Prostate gland (tissue), 2 donors: ENCODE measurements at regions of chr11 and their contacts with region 1.

Region 1: GRCh38 chr11:79437278-79437980 is 3.4 kb downstream of the TENM4 start:
- DNase-seq: peak; percentile 44
- H3K4me3 ChIP-seq: peak overlapping the region; percentile 27
- H3K27ac ChIP-seq: peak overlapping the region in 1 of 2 donors; percentile 7
- H3K4me1 ChIP-seq: peaks cover 6% of the 10 kb centered on the region
- H3K27me3 ChIP-seq: no peaks in the 10 kb centered on the region
- CTCF ChIP-seq: no peak
- POLR2A ChIP-seq: no peak

Region 2: GRCh38 chr11:79236541-79236971 is 200.9 kb before region 1 on chr11:
- intact Hi-C with region 1: loop called (anchors 5 kb)
- DNase-seq: no peak
- H3K4me3 ChIP-seq: no peak overlapping the region
- H3K27ac ChIP-seq: no peak overlapping the region
- H3K4me1 ChIP-seq: no peaks in the 10 kb centered on the region
- H3K27me3 ChIP-seq: no peaks in the 10 kb centered on the region
- CTCF ChIP-seq: no peak
- POLR2A ChIP-seq: no peak